Endothelial cell of umbilical vein (primary cell): ENCODE measurements at regions of chr12 and their contacts with region 1.

Region 1: GRCh38 chr12:13124661-13125505 is 21.4 kb upstream of the GSG1 start:
- DNase-seq: peak; percentile 89
- H3K4me3 ChIP-seq: no peak overlapping the region
- H3K27ac ChIP-seq: peak overlapping the region; percentile 90
- H3K4me1 ChIP-seq: peaks cover 20% of the 10 kb centered on the region
- H3K27me3 ChIP-seq: no peaks in the 10 kb centered on the region
- CTCF ChIP-seq: no peak
- POLR2A ChIP-seq: peak; percentile 45

Region 2: GRCh38 chr12:13114251-13115052 is 10.4 kb before region 1 on chr12:
- CTCF ChIA-PET with region 1: interaction called, 9 read pairs
- POLR2A ChIA-PET with region 1: interaction called, 4 read pairs
- dilution Hi-C with region 1: no loop called
- intact Hi-C with region 1: loop called (anchors 1 kb)
- DNase-seq: no peak
- H3K4me3 ChIP-seq: no peak overlapping the region
- H3K27ac ChIP-seq: no peak overlapping the region
- H3K4me1 ChIP-seq: peaks cover 25% of the 10 kb centered on the region
- H3K27me3 ChIP-seq: no peaks in the 10 kb centered on the region
- CTCF ChIP-seq: no peak
- POLR2A ChIP-seq: no peak

Region 3: DNA sequence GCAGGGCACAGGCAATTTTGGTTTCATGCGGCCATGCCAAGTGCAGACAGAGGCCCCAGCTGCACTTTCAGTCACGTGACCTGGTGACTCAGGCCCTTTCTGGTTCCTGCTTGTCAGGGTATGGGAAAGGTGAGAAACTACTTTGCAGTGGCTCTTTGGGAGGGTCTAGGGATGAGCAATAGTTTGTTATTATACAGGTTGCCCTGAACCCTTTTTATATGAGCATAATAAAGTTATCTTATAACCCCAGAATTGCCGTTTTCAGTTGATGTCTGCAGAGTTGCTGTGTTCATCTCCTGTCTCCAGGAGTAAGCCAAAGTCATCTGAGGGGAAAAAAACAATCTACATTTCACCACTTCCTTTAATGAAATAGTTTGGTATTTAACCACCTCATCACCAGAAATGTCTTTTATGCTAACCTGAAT is 40.7 kb after region 1 on chr12:
- CTCF ChIA-PET with region 1: no interaction called
- POLR2A ChIA-PET with region 1: interaction called, 3 read pairs
- dilution Hi-C with region 1: no loop called
- intact Hi-C with region 1: loop called (anchors 1 kb)
- DNase-seq: peak; percentile 85
- H3K4me3 ChIP-seq: no peak overlapping the region
- H3K27ac ChIP-seq: peak overlapping the region; percentile 54
- H3K4me1 ChIP-seq: peaks cover 34% of the 10 kb centered on the region
- H3K27me3 ChIP-seq: no peaks in the 10 kb centered on the region
- CTCF ChIP-seq: no peak
- POLR2A ChIP-seq: no peak

Region 4: GRCh38 chr12:13196130-13196921 is 71.4 kb after region 1 on chr12 and contains the start of gene EMP1:
- CTCF ChIA-PET with region 1: interaction called, 7 read pairs
- POLR2A ChIA-PET with region 1: interaction called, 11 read pairs
- dilution Hi-C with region 1: no loop called
- intact Hi-C with region 1: loop called (anchors 1 kb)
- DNase-seq: peak; percentile 99
- H3K4me3 ChIP-seq: peak within 1 kb of the TSS; percentile 85 to 99 (median 95)
- H3K27ac ChIP-seq: peak within 1 kb of the TSS; percentile 96
- H3K4me1 ChIP-seq: peaks cover 35% of the 10 kb centered on the region
- H3K27me3 ChIP-seq: no peaks in the 10 kb centered on the region
- CTCF ChIP-seq: no peak
- POLR2A ChIP-seq: peak; percentile 99
- total RNA-seq, gene EMP1: 528 and 577 TPM in 2 replicates

Region 5: GRCh38 chr12:13203034-13203922 is 78.4 kb after region 1 on chr12:
- CTCF ChIA-PET with region 1: interaction called, 7 read pairs
- POLR2A ChIA-PET with region 1: interaction called, 4 read pairs
- dilution Hi-C with region 1: no loop called
- intact Hi-C with region 1: loop called (anchors 2 kb)
- DNase-seq: peak; percentile 46
- H3K4me3 ChIP-seq: no peak overlapping the region
- H3K27ac ChIP-seq: peak overlapping the region; percentile 97
- H3K4me1 ChIP-seq: peaks cover 90% of the 10 kb centered on the region
- H3K27me3 ChIP-seq: no peaks in the 10 kb centered on the region
- CTCF ChIP-seq: peak; percentile 28 to 46
- POLR2A ChIP-seq: no peak

Region 6: GRCh38 chr12:14379508-14379907 is 1254.6 kb after region 1 on chr12:
- CTCF ChIA-PET with region 1: no interaction called
- POLR2A ChIA-PET with region 1: no interaction called
- dilution Hi-C with region 1: no loop called
- intact Hi-C with region 1: no loop called
- DNase-seq: no peak
- H3K4me3 ChIP-seq: no peak overlapping the region
- H3K27ac ChIP-seq: no peak overlapping the region
- H3K4me1 ChIP-seq: peaks cover 7% of the 10 kb centered on the region
- H3K27me3 ChIP-seq: no peaks in the 10 kb centered on the region
- CTCF ChIP-seq: no peak
- POLR2A ChIP-seq: no peak